Body of pancreas (tissue), 4 donors: ENCODE measurements at regions of chr5 and their contacts with region 1.

Region 1: DNA sequence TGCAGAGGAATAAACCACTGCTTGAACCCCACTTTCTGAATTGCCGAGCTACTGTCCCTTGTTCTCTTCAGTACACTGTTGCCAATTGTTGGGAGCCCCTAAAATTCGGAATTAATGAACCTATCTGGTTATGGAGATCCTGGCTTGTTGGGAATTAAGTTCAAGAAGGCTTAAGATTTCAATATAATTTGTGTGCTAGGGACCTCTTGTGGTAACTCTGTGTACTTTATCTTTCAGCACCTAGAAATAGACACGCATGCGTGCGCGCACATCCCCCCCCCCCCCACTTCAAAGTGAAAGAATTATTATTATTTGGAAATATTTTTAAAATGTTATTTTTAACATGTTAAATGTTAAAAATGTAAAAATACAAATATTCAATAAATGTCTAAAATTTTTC is 53.3 kb upstream of the FAM169A start:
- DNase-seq: peak in 2 of 4 donors; percentile 14 to 16
- ATAC-seq: peak; percentile 50
- H3K4me3 ChIP-seq: no peak overlapping the region
- H3K27ac ChIP-seq: no peak overlapping the region
- H3K4me1 ChIP-seq: no peaks in the 10 kb centered on the region
- H3K27me3 ChIP-seq: no peaks in the 10 kb centered on the region
- CTCF ChIP-seq: peak in 6 of 7 experiments; percentile 33 to 69 (median 62)
- POLR2A ChIP-seq: no peak

Region 2: DNA sequence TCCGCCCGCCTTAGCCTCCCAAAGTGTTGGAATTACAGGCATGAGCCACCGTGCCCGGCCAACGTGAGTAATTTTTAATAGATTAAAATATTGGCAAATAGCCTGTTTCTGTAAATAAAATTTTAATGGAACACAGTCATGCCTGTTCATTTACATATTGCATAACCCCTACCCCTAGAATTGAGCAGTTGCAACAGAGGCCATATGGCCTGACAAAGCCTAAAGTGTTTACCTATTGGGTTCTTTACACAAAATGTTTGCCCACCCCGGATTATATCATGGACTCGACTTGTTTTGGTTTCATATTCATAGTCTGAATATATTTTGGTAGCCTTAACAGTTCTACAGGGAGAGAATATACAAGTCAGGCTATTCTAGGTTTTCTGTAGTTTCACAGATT is 147.1 kb before region 1 on chr5:
- intact Hi-C with region 1: loop called (anchors 10 kb)
- DNase-seq: no peak
- ATAC-seq: no peak
- H3K4me3 ChIP-seq: no peak overlapping the region
- H3K27ac ChIP-seq: no peak overlapping the region
- H3K4me1 ChIP-seq: peaks cover 10% of the 10 kb centered on the region
- H3K27me3 ChIP-seq: no peaks in the 10 kb centered on the region
- CTCF ChIP-seq: no peak
- POLR2A ChIP-seq: no peak

Region 3: DNA sequence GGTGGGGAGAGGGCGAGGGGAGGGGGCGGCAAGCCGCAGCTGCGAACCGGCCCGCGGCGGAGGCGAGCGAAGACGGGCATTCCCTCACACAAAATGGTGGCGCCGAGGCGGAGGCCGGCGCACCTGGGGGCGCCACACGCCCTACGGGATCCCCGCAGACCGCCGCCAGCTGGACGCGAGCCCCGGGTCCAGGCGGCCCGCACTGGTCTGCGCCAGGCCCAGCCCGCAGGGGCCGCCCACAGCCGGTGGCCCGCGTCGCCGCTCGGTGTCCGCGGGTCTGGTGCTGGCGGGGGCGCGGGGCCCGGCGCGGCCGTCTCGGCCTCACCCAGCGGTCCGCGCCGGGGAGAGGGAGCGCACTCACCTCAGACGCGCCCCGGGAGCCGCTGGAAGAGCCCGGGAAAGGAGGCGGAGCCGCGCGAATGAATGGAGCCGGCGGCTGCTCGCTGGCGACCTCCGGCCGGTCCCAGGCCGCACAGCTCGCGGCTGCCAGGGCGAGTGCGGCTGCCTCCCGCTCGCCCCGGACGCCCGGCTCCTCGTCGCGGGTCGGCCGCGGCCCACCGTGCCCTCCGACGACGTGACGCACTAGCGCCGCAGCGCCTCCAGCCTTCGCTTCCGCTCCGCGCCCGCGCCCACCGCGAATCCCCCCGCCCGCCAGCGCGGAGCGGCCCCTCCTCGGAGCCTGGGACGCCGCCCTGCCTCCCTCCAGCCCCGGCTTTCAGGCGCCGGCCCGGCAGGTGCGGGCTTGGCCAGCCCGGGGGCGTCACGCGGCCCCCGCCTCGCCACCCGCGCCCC is 53.5 kb before region 1 on chr5 and contains the start of gene FAM169A:
- intact Hi-C with region 1: no loop called
- DNase-seq: peak; percentile 28 to 54 (median 39)
- ATAC-seq: peak; percentile 78
- H3K4me3 ChIP-seq: peak within 1 kb of the TSS; percentile 14 to 17
- H3K27ac ChIP-seq: peak within 1 kb of the TSS in 3 of 4 donors; percentile 37 to 77 (median 72)
- H3K4me1 ChIP-seq: peaks cover 16% of the 10 kb centered on the region
- H3K27me3 ChIP-seq: no peaks in the 10 kb centered on the region
- CTCF ChIP-seq: no peak
- POLR2A ChIP-seq: peak in 1 of 3 donors; percentile 25
- total RNA-seq, gene FAM169A: 2.0 to 2.9 TPM

Region 4: DNA sequence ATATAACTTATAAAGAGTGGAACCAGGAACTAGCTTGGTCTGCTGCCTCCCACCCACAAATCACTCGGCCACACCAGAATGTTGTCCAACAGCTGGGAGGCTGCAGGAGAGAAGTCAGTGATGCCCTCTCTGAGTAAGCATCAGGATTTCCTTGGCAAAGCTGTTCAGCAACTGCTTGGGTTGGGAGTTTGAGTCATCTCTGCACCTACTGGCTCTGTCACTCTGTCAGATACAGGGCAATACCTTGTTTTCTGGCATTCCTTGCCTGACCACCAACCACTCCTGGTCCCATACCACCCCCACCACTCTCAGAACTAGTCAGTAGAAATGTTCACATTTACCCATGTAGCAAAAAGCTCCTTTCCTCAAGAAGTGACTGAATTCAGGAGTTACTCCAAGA is 169.7 kb after region 1 on chr5:
- intact Hi-C with region 1: no loop called
- DNase-seq: no peak
- ATAC-seq: no peak
- H3K4me3 ChIP-seq: no peak overlapping the region
- H3K27ac ChIP-seq: no peak overlapping the region
- H3K4me1 ChIP-seq: no peaks in the 10 kb centered on the region
- H3K27me3 ChIP-seq: no peaks in the 10 kb centered on the region
- CTCF ChIP-seq: no peak
- POLR2A ChIP-seq: no peak

Region 5: GRCh38 chr5:75336625-75337339 is 417.3 kb after region 1 on chr5 and contains the start of gene HMGCR:
- intact Hi-C with region 1: loop called (anchors 10 kb)
- DNase-seq: peak; percentile 98 to 99 (median 98)
- ATAC-seq: peak; percentile 97
- H3K4me3 ChIP-seq: peak within 1 kb of the TSS; percentile 83 to 100
- H3K27ac ChIP-seq: peak within 1 kb of the TSS; percentile 85 to 96 (median 94)
- H3K4me1 ChIP-seq: peaks cover 20% of the 10 kb centered on the region
- H3K27me3 ChIP-seq: no peaks in the 10 kb centered on the region
- CTCF ChIP-seq: peak in 2 of 7 experiments; percentile 29 to 44
- POLR2A ChIP-seq: peak; percentile 59 to 90 (median 88)
- total RNA-seq, gene HMGCR: 5.9 to 8.3 TPM